HEK293 (cell line): ENCODE measurements at regions of chr4 and their contacts with region 1.

Region 1: DNA sequence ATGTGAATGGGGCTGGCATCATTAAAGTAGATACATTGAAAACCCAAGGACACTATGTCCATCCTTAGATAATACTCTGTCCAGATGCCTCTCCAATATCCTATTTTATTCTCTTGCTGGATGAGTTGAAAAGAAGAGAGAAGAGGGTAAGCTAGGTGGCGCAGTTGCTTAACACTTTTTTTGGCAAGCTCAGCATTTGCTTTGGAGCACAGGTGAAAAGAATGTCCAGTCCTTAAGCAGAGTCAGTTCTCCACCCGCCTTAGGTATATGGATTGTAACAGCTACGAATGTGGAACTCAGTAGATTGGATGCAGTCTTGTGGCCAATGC is 208.4 kb downstream of the NWD2 start:
- H3K4me3 ChIP-seq: peak overlapping the region; percentile 40
- H3K27ac ChIP-seq: no peak overlapping the region; the same call in 1 of the 2 replicates
- H3K4me1 ChIP-seq: no peaks in the 10 kb centered on the region; the same call in 1 of the 2 replicates
- CTCF ChIP-seq: no peak

Region 2: DNA sequence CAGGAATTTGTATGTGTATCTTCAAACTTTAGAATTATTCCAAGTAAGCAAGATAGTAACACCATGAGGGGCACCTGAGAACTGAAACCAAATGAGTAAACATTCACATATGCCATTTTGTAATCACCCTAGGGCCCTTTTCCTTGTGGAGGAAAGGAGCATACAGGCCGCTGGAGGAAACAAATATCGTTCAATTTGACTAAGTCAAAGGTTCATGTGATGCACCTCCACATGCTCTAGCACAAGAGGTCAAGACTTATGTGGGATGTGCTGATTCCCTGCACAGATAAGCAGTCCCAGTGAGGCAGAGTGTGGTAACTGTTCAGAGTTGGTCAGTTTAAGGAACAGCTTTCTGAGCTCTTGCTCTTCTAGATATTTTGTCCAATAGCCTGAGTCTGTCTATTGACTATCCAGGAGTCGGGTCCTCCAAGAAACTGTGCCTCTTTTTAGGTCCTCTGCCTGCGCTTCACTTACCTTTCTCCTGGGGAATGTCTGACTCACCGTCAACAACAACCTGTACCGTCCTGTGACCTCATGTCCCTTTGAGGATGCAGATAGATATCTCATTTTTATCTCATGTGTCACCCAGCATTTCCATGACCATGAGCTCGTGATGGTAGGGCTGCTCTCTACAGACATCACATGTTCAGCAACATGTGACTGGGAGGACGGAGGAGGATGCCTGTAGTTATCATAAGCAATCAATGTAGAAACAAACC is 11.5 kb before region 1 on chr4:
- CTCF ChIA-PET with region 1: interaction called, 14 read pairs
- POLR2A ChIA-PET with region 1: interaction called, 4 read pairs
- H3K4me3 ChIP-seq: no peak overlapping the region
- H3K27ac ChIP-seq: no peak overlapping the region
- H3K4me1 ChIP-seq: no peaks in the 10 kb centered on the region
- CTCF ChIP-seq: no peak

Region 3: GRCh38 chr4:37567841-37568240 is 114.9 kb after region 1 on chr4:
- CTCF ChIA-PET with region 1: interaction called, 25 read pairs
- POLR2A ChIA-PET with region 1: no interaction called
- H3K4me3 ChIP-seq: no peak overlapping the region
- H3K27ac ChIP-seq: no peak overlapping the region
- H3K4me1 ChIP-seq: no peaks in the 10 kb centered on the region
- CTCF ChIP-seq: no peak

Region 4: DNA sequence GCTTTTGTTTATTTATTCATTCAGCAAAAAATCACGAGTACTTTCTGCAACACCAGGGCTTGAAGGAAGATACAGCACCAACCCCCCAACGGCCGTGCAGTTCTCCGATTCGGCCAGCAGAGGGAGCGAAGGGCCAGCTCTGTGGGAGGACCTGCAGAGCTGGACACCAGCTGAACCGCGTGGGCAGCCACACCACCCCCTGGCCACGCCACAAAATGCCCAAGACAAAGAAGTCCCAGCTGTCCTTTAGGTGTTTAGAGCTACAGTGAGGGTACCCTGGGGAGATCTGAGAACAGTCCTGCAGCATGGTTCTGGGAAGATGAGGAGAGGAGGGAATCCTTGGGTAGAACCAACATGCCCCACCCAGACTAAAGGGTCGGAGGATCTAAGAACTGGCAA is 150.2 kb after region 1 on chr4:
- CTCF ChIA-PET with region 1: interaction called, 10 read pairs
- POLR2A ChIA-PET with region 1: no interaction called
- H3K4me3 ChIP-seq: no peak overlapping the region
- H3K27ac ChIP-seq: no peak overlapping the region
- H3K4me1 ChIP-seq: no peaks in the 10 kb centered on the region
- CTCF ChIP-seq: peak; percentile 80